ENCODE measurements at regions of chr1 and their contacts with region 1.

Region 1: GRCh38 chr1:38026592-38027200 is 14.2 kb downstream of the UTP11 start:
- DNase-seq: peak; percentile 93
- H3K4me3 ChIP-seq: no peak overlapping the region
- H3K27ac ChIP-seq: peak overlapping the region; percentile 95
- H3K4me1 ChIP-seq: peaks cover 81% of the 10 kb centered on the region
- H3K27me3 ChIP-seq: no peaks in the 10 kb centered on the region
- CTCF ChIP-seq: peak; percentile 90

Region 2: DNA sequence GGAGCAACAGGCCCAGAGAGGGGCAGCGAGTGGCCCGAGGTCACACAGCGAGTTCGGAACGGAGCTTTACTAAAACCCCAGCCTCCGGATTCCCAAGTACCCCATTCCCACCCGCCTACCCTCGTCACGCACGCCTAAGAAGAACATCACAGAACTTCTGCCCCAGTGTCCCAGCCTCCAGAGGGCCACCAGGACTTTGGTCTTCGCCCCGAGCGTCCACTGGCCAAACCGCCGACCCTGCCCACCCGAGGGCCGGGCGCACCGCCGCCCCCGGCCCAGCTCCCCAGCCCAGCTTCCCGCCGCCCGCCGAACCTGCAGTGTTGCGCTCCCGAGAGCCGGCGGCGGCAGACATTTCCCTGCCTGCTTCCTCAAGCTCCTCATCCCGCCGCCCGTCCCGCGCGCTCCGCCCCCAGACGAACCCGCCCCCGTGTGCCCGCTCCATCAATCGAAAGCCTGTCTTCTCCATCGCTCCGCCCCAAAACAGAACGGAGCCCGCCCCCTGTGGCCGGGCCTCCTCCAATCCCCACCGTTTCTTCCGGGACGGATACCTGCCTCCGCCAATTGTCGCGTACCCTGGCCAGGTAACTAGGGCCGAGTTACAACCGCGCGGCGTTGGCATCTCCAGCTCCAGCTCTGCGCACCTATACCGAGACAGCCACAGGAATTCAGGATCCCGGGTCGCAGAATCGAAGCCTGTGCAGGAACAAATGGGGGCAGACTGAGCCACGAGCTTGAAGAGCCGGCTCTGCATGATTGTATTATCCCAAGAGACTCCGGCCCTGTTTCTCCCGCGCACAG is 95.1 kb before region 1 on chr1:
- CTCF ChIA-PET with region 1: no interaction called
- POLR2A ChIA-PET with region 1: no interaction called
- intact Hi-C with region 1: no loop called
- DNase-seq: peak; percentile 99
- H3K4me3 ChIP-seq: peak overlapping the region; percentile 88
- H3K27ac ChIP-seq: peak overlapping the region; percentile 71
- H3K4me1 ChIP-seq: peaks cover 7% of the 10 kb centered on the region
- H3K27me3 ChIP-seq: no peaks in the 10 kb centered on the region
- CTCF ChIP-seq: no peak

Region 3: DNA sequence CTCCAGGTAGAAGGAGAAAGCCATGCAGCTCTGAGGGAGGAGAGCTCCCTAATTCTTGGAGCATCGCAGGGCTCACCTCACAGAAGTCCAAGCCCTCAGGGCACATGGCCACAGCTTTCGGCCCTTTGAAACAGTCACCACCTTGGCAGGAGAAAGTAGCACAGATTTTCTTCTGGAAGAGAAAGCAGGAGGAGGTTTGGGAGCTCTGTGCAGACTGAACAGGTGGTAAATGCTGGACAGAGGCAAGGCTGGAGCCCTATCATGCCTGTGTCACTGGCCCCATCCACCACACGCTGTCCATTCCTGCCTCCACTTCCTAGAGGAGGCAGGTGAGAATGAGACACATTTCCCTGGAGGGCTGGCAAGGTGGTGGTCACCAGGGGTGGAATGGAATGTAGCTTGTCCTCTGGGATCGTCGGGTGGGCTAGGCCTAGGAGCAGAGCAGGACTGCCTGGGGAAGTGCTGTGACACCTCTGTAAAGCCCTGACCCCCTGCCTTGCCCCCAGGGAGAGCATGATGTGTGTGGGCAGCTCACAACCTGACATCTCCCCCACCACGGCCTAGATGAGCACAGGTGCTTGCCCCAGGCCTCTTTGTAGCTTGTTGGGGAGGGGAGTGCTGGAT is 77.1 kb before region 1 on chr1:
- CTCF ChIA-PET with region 1: interaction called, 10 read pairs
- POLR2A ChIA-PET with region 1: no interaction called
- intact Hi-C with region 1: no loop called
- DNase-seq: no peak
- H3K4me3 ChIP-seq: no peak overlapping the region
- H3K27ac ChIP-seq: no peak overlapping the region
- H3K4me1 ChIP-seq: no peaks in the 10 kb centered on the region
- H3K27me3 ChIP-seq: no peaks in the 10 kb centered on the region
- CTCF ChIP-seq: no peak

Region 4: GRCh38 chr1:38071312-38072256 is 44.9 kb after region 1 on chr1:
- CTCF ChIA-PET with region 1: interaction called, 14 read pairs
- POLR2A ChIA-PET with region 1: interaction called, 3 read pairs
- intact Hi-C with region 1: no loop called
- DNase-seq: peak; percentile 87
- H3K4me3 ChIP-seq: no peak overlapping the region
- H3K27ac ChIP-seq: peak overlapping the region; percentile 75
- H3K4me1 ChIP-seq: peaks cover 100% of the 10 kb centered on the region
- H3K27me3 ChIP-seq: no peaks in the 10 kb centered on the region
- CTCF ChIP-seq: peak; percentile 74

Region 5: GRCh38 chr1:38291906-38292521 is 265.3 kb after region 1 on chr1:
- CTCF ChIA-PET with region 1: no interaction called
- POLR2A ChIA-PET with region 1: no interaction called
- intact Hi-C with region 1: loop called (anchors 10 kb)
- DNase-seq: no peak
- H3K4me3 ChIP-seq: no peak overlapping the region
- H3K27ac ChIP-seq: no peak overlapping the region
- H3K4me1 ChIP-seq: peaks cover under 1% of the 10 kb centered on the region
- H3K27me3 ChIP-seq: no peaks in the 10 kb centered on the region
- CTCF ChIP-seq: no peak

Region 6: DNA sequence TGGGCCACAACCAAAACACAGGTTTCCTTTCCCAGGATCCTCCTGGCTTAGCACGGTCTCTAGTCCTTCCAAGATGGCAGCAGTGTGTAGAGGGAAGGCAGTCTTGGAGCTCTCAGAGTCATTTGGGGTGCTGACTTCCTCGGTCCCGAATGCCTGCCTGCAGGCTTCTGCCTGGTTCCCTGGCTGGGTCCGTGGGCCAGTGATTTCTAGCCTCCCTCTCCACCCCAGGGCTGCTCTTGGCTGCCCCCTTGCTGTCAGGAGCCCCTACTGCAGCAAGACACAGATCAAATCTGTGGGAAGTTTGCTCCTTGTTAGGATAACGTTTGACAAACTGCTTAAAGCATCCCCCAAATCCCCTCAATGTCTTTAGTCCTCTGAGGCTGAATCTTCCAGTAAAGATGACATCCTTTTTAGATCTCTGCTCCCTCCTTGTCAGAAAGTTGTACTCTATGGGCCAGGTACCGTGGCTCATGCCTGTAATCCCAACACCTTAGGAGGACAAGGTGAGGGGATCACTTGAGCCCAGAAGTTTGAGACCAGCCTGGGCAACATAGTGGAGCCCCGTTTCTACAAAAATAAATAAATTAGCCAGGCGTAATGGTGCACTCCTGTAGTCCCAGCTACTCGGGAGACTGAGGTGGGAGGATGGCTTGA is 560.4 kb after region 1 on chr1:
- CTCF ChIA-PET with region 1: no interaction called
- POLR2A ChIA-PET with region 1: no interaction called
- intact Hi-C with region 1: loop called (anchors 5 kb)
- DNase-seq: peak; percentile 84
- H3K4me3 ChIP-seq: no peak overlapping the region
- H3K27ac ChIP-seq: peak overlapping the region; percentile 45
- H3K4me1 ChIP-seq: peaks cover 64% of the 10 kb centered on the region
- H3K27me3 ChIP-seq: no peaks in the 10 kb centered on the region
- CTCF ChIP-seq: peak; percentile 99

Region 7: DNA sequence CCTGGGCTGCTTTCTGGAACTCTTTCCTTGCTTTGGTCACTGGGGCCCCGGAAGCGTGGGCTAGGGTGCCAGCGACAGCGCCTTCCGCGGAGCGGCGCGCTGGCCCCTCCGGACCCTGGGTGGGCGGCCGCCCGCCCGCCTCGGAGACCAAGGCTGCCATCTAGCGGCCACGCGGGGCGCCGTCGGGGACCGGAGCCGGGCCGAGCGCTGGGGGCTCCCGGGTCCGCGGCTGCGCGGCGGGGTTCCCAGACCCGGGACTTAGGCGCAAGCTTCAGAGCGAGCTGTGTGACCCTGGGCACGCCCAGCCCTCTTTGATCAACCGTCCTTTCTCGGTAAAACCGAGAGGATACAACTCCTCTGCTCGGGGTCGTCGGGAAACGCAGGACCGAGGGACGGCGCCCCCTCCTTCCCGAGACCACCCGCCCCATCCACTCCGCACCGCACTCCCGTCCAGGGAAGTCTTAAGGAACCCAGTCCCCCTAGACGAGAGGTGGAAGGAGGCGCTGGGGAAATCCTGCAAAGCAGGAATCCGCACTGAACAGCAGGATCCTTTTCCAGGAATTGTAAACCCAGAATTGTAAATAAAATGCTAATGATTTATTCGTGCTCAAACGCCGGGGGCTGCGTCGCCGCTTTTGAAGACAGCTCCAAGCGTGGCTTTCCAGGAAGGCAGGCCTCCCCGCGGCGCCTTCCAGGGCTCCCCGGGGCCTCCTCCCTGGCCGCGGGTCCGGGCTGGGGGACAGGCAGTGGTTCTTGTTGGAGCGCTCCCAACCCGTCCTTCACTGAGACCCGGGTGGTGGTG is 791.7 kb after region 1 on chr1:
- CTCF ChIA-PET with region 1: no interaction called
- POLR2A ChIA-PET with region 1: no interaction called
- intact Hi-C with region 1: loop called (anchors 5 kb)
- DNase-seq: peak; percentile 75
- H3K4me3 ChIP-seq: peak overlapping the region; percentile 60
- H3K27ac ChIP-seq: peak overlapping the region; percentile 63
- H3K4me1 ChIP-seq: peaks cover 6% of the 10 kb centered on the region
- H3K27me3 ChIP-seq: no peaks in the 10 kb centered on the region
- CTCF ChIP-seq: no peak; the same call in none of the 2 replicates

Region 8: GRCh38 chr1:38834937-38835827 is 808.5 kb after region 1 on chr1:
- CTCF ChIA-PET with region 1: interaction called, 5 read pairs
- POLR2A ChIA-PET with region 1: no interaction called
- intact Hi-C with region 1: loop called (anchors 2 kb)
- DNase-seq: peak; percentile 89
- H3K4me3 ChIP-seq: no peak overlapping the region
- H3K27ac ChIP-seq: no peak overlapping the region
- H3K4me1 ChIP-seq: peaks cover 6% of the 10 kb centered on the region
- H3K27me3 ChIP-seq: no peaks in the 10 kb centered on the region
- CTCF ChIP-seq: peak; percentile 86

Measured in A673 (cell line).